Keratinocyte (primary cell): ENCODE measurements at regions of chr13 and their contacts with region 1.

Region 1: DNA sequence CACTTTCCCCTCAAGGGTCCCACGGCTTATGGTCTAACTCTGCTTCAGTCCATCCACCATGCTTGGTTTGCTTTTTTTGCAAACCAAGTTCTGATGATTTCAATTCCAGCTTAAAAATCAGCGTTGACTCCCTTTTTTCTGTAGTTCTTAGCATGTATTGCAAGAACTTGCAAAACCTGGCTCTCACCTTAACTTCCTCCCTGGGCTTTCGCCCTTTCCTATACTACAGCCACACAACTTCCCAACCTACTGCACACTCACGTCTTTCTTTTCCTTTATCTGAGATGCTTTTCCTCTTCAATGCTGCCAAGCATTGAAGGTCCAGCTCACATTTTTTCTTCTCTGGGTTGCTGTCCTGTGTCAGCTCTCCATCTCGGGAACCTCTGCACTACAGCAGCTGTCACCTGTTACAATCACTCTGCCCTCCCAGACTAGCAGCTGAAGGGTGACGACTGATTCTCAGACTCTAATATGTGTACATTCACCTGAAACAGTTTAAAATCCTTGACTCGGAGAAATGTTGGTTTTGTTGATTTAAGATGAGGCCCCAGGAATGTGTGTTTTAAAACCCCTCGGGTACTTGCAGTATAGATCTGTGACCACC is 143.7 kb downstream of the FREM2 start:
- DNase-seq: no peak
- H3K4me3 ChIP-seq: no peak overlapping the region
- H3K27ac ChIP-seq: no peak overlapping the region
- H3K4me1 ChIP-seq: no peaks in the 10 kb centered on the region
- H3K27me3 ChIP-seq: no peaks in the 10 kb centered on the region
- CTCF ChIP-seq: no peak

Region 2: DNA sequence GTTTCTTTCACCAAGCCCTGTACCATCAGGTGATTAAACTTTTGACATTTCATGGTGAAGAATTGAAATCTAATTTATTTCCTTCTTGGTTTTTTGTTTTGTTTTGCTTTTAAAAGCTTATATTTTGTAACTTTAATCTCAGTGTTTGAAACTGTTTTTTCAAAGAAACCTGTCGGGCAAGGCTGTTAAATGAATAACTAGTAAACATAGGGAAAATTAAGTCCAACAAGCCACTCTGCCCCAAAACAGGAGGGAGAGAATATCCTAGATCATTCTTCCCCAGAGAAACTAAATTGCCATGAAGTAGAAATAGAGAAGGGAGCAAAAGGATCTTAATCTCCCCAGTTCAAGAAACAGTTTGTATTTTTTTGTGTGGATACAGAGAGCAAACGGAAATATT is 45.5 kb before region 1 on chr13:
- dilution Hi-C with region 1: loop called (anchors 5 kb)
- DNase-seq: no peak
- H3K4me3 ChIP-seq: no peak overlapping the region
- H3K27ac ChIP-seq: no peak overlapping the region
- H3K4me1 ChIP-seq: no peaks in the 10 kb centered on the region
- H3K27me3 ChIP-seq: no peaks in the 10 kb centered on the region
- CTCF ChIP-seq: no peak

Region 3: GRCh38 chr13:38872693-38873092 is 42.1 kb after region 1 on chr13:
- dilution Hi-C with region 1: no loop called
- DNase-seq: no peak
- H3K4me3 ChIP-seq: no peak overlapping the region
- H3K27ac ChIP-seq: no peak overlapping the region
- H3K4me1 ChIP-seq: no peaks in the 10 kb centered on the region
- H3K27me3 ChIP-seq: no peaks in the 10 kb centered on the region
- CTCF ChIP-seq: peak; percentile 51 to 64 (median 54)